ENCODE measurements at regions of chr11 and their contacts with region 1.

Region 1: DNA sequence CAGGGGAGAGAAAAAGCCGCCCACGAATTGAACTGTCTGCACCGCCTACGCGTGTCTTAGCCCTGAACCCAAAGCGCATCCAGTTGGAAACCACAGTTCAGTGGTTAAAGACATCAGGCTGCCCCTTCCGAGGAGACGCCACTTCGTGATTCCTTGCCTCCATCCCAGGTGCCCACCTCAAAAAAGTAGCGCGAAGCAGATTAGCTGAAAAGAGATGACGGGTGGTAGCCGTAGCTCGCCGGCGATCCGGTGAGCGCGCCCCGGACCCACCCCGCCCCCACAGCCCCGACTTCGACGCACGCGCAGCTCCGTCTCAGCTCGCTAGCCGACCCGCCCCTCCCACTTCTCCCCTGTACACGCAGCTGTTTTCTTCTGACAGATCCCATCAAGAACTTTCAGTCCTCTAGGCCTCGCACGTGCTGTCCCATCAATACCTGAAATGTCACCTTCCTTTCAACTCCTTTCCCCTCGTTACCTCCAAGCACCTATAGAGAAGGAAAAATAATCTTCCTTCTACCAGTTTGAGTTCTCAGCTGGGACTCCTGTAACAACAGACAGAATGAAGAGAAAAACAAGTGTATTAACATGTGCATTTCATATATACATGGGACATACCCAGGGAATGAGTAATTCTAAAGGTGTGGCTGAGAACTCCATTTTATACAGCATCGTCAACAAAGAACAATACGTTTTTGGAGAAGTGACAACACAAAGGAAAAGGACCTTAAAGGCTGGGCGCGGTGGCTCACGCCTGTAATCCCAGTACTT is 49.5 kb downstream of the OR4D9 start:
- DNase-seq: peak; percentile 68 to 86 (median 75)
- H3K4me3 ChIP-seq: peak overlapping the region; percentile 52 to 98 (median 85)
- H3K27ac ChIP-seq: peak overlapping the region; percentile 67 to 97 (median 93)
- H3K27me3 ChIP-seq: no peaks in the 10 kb centered on the region
- CTCF ChIP-seq: peak in 4 of 56 donors; percentile 6 to 22 (median 10)

Region 2: DNA sequence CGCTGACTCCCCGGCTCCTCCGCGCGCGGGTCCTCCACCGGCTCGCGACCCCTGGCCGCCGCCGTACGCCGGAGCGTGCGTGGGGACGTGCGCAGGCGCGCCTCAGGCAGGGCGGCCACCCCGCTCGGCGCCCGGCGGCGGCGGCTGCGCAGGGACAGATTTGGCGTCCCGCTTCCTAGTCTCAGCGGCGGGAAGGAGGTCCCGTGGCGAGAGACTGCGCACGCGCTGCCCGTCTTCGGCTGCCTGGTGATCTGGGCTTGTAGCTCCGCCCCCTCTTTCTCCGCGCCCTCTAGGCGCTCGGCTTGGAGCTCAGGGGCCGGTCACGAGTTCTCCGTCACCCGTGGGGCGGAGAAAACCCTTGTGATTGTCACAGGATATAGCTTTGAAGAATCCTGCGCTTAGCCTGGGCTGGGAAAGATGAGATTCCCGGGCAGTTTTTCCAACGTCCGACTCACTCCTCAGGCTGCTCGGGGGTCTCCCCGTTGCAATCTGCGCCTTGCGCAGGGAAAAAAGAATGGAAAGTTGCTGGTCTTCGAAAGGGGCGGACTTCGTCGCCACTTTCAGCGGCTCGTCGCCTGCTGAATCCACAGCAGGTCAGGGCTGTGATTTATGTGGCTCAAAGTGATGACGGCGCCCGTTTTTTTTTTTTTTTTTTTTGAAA is 108.2 kb after region 1 on chr11 and contains the start of gene PATL1:
- intact Hi-C with region 1: loop called (anchors 2 to 10 kb)
- DNase-seq: peak; percentile 98 to 99 (median 98)
- H3K4me3 ChIP-seq: peak within 1 kb of the TSS; percentile 62 to 97 (median 87)
- H3K27ac ChIP-seq: peak within 1 kb of the TSS; percentile 91 to 100 (median 99)
- H3K27me3 ChIP-seq: no peaks in the 10 kb centered on the region
- CTCF ChIP-seq: peak in 23 of 56 donors; percentile 3 to 52 (median 29)
- total RNA-seq, gene PATL1: 14.6 to 38.0 (median 20.9) TPM

Region 3: DNA sequence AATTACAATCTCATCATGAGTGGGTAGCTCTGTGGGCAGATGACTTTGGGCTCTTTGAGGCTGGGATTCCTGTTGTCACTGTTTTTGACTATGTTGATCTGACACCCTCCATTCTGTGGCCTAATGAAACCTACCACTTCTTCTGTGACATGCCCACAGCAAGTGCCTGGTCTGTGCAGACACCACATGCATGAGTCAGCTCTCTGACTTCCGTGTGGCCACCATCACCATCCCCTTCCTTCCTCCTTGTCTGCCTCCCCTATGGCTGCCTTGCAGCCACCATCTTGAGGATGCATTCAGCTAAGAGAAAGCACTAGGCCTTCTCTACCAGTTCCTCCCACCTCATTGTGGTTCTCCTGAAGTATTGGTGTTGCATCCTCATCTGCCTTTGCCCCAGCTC is 168.0 kb after region 1 on chr11:
- intact Hi-C with region 1: no loop called
- DNase-seq: no peak
- H3K4me3 ChIP-seq: no peak overlapping the region
- H3K27ac ChIP-seq: no peak overlapping the region
- H3K27me3 ChIP-seq: no peaks in the 10 kb centered on the region
- CTCF ChIP-seq: no peak

Region 4: DNA sequence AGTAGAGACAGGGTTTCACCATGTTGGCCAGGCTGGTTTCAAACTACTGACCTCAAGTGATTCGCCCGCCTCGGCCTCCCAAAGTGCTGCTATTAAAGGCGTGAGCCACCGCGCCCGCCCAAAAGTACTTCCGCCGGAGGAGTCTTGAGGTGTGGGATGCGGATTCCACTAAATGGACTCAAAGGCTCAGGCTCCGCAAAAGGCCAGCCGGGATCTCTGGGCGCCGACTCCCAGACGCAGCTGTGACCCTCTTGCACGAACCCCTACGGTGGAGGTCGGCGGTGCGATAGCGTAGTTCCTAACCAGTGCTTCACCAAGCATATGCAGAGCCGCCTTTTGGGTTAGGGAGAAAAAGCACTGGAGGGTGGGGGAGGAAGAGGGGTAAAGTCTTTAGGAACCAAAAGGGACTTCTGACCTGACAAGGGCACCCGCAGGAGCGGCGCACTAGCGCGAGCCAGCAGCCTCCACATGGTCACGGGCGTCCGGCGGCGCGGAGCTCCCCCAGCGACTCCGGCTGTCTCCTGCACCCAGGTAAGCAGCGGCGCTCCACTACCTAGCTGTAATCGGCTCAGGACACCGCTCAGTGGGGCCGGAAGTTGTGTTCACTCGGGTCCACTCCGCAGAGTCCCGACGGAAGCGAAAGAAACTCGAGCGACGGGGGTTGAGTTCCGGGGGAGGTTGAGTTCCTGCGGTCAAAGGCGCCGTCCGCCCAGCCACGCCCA is 249.5 kb after region 1 on chr11 and contains the start of gene MRPL16:
- intact Hi-C with region 1: loop called in 1 of 2 experiments (anchors 5 kb)
- DNase-seq: peak; percentile 68 to 91 (median 87)
- H3K4me3 ChIP-seq: peak within 1 kb of the TSS; percentile 68 to 99 (median 91)
- H3K27ac ChIP-seq: peak within 1 kb of the TSS in 56 of 59 donors; percentile 5 to 91 (median 76)
- H3K27me3 ChIP-seq: peaks cover 0 to 10% (median 0%) of the 10 kb centered on the region in 45 donors
- CTCF ChIP-seq: peak in 41 of 56 donors; percentile 8 to 59 (median 34)
- total RNA-seq, gene MRPL16: 21.6 to 49.1 (median 35.3) TPM

Region 5: DNA sequence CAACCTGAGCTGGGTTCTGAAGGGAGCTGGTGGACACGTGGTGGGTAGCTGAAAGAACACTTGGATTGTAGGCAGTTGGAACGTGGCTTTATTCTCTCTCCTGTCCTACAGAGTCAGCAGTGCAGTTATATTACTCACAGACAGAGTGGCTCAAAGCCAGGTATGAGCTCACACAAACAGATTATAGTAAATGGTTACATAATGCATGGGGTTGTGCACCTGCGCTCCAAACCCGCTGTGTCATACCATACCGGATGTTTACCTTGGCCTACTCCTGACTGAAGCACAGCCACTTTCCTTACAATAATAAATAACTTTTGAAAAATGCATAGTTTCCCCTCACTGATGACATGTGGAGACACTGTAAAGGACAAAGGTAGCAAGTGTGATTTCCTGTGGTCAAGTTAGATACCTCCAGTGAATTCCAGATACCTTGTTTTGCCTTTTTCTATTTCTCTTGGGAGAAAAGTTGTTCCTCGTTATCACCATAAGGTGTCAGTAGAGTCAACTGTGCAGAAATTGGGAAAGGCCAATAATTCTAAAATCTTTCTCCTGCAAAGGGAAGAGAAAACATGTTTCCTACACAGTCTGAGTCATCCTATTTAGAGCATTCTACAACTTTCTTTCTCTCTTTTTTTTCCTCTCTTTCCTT is 608.5 kb after region 1 on chr11:
- intact Hi-C with region 1: no loop called
- DNase-seq: no peak
- H3K4me3 ChIP-seq: no peak overlapping the region
- H3K27ac ChIP-seq: no peak overlapping the region
- H3K27me3 ChIP-seq: peaks cover 0 to 4% (median 0%) of the 10 kb centered on the region in 45 donors
- CTCF ChIP-seq: peak in 52 of 56 donors; percentile 19 to 54 (median 37)

Measured in dorsolateral prefrontal cortex (tissue), 120 donors.